CD8-positive, alpha-beta memory T cell (primary cell): ENCODE measurements at regions of chr12 and their contacts with region 1.

Region 1: GRCh38 chr12:96501139-96501761 is 11.9 kb downstream of the CFAP54 start:
- DNase-seq: peak in 4 of 5 donors; percentile 17 to 63 (median 40)
- H3K4me3 ChIP-seq: peak overlapping the region; percentile 3
- H3K4me3 Mint-ChIP-seq: peak overlapping the region in 6 of 7 donors; percentile 8 to 69 (median 62)
- H3K27ac ChIP-seq: peak overlapping the region; percentile 35
- H3K27ac Mint-ChIP-seq: peak overlapping the region; percentile 84 to 98 (median 93)
- H3K4me1 ChIP-seq: peaks cover 30% of the 10 kb centered on the region
- H3K4me1 Mint-ChIP-seq: peaks cover 51 to 71% (median 60%) of the 10 kb centered on the region in 3 donors
- H3K27me3 ChIP-seq: no peaks in the 10 kb centered on the region
- H3K27me3 Mint-ChIP-seq: no peaks in the 10 kb centered on the region

Region 2: GRCh38 chr12:96409731-96410130 is 91.5 kb before region 1 on chr12:
- CTCF ChIA-PET with region 1: no interaction called
- POLR2A ChIA-PET with region 1: no interaction called
- DNase-seq: no peak
- H3K4me3 ChIP-seq: no peak overlapping the region
- H3K4me3 Mint-ChIP-seq: no peak overlapping the region
- H3K27ac ChIP-seq: no peak overlapping the region
- H3K27ac Mint-ChIP-seq: no peak overlapping the region
- H3K4me1 ChIP-seq: no peaks in the 10 kb centered on the region
- H3K4me1 Mint-ChIP-seq: no peaks in the 10 kb centered on the region
- H3K27me3 ChIP-seq: no peaks in the 10 kb centered on the region
- H3K27me3 Mint-ChIP-seq: peaks cover 0 to 2% of the 10 kb centered on the region in 2 donors

Region 3: DNA sequence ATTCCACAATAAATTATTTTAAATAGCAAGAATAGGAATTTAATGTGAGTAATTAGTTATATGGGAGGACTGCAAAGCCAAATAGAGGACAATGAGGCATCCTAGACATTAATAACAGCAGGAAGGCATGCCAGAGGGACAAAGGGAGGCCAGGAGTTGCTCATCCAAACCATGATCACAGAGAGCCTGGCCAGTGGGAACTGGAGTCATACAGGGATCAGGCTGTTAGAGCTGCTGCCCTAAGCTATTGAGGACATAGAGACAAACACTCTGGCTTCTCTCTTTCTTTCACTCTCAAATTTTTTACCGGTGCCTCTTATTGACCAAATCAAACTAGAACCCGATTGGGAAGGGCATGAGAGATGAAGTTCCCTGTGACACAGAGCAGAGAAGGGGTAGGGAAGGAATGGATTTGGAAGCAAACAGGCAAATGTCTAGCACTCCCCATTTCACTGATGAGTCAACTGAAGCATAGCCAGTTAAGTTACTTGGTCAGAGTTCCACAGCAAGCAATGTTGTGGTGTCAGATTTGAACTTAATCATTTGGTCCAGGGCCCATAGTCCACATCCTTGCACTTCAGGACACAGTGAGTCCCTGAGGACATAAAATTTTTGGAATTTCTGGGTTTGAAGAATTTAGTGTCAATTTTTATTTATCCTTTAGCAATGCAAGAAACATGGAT is 29.7 kb before region 1 on chr12:
- CTCF ChIA-PET with region 1: no interaction called
- POLR2A ChIA-PET with region 1: no interaction called
- DNase-seq: no peak
- H3K4me3 ChIP-seq: no peak overlapping the region
- H3K4me3 Mint-ChIP-seq: no peak overlapping the region
- H3K27ac ChIP-seq: no peak overlapping the region
- H3K27ac Mint-ChIP-seq: peak overlapping the region in 1 of 8 donors; percentile 33
- H3K4me1 ChIP-seq: peaks cover 5% of the 10 kb centered on the region
- H3K4me1 Mint-ChIP-seq: peaks cover 18 to 22% (median 20%) of the 10 kb centered on the region in 3 donors
- H3K27me3 ChIP-seq: no peaks in the 10 kb centered on the region
- H3K27me3 Mint-ChIP-seq: no peaks in the 10 kb centered on the region

Region 4: GRCh38 chr12:96489103-96490056 is 11.9 kb before region 1 on chr12 and contains the start of gene CFAP54:
- CTCF ChIA-PET with region 1: interaction called, 16 read pairs
- POLR2A ChIA-PET with region 1: no interaction called
- DNase-seq: peak; percentile 92 to 97 (median 93)
- H3K4me3 ChIP-seq: peak within 1 kb of the TSS; percentile 66
- H3K4me3 Mint-ChIP-seq: peak within 1 kb of the TSS; percentile 82 to 94 (median 92)
- H3K27ac ChIP-seq: peak within 1 kb of the TSS; percentile 79
- H3K27ac Mint-ChIP-seq: peak within 1 kb of the TSS; percentile 61 to 99 (median 97)
- H3K4me1 ChIP-seq: peaks cover 20% of the 10 kb centered on the region
- H3K4me1 Mint-ChIP-seq: peaks cover 22 to 41% (median 39%) of the 10 kb centered on the region in 3 donors
- H3K27me3 ChIP-seq: no peaks in the 10 kb centered on the region
- H3K27me3 Mint-ChIP-seq: peaks cover 0 to 7% of the 10 kb centered on the region in 2 donors
- total RNA-seq, gene CFAP54: 0.66 to 0.88 TPM

Region 5: GRCh38 chr12:96606644-96607295 is 105.5 kb after region 1 on chr12:
- CTCF ChIA-PET with region 1: no interaction called
- POLR2A ChIA-PET with region 1: no interaction called
- DNase-seq: no peak
- H3K4me3 ChIP-seq: no peak overlapping the region
- H3K4me3 Mint-ChIP-seq: no peak overlapping the region
- H3K27ac ChIP-seq: no peak overlapping the region
- H3K27ac Mint-ChIP-seq: no peak overlapping the region
- H3K4me1 ChIP-seq: no peaks in the 10 kb centered on the region
- H3K4me1 Mint-ChIP-seq: no peaks in the 10 kb centered on the region
- H3K27me3 ChIP-seq: no peaks in the 10 kb centered on the region
- H3K27me3 Mint-ChIP-seq: peaks cover 20 to 59% of the 10 kb centered on the region in 2 donors